ENCODE measurements at regions of chr12 and their contacts with region 1.

Region 1: GRCh38 chr12:84874125-84874824 is 38.3 kb downstream of the SLC6A15 start:
- H3K4me3 ChIP-seq: no peak overlapping the region
- H3K27ac ChIP-seq: no peak overlapping the region
- H3K4me1 ChIP-seq: no peaks in the 10 kb centered on the region
- CTCF ChIP-seq: peak; percentile 43; the same call in 1 of the 2 replicates

Region 2: GRCh38 chr12:84785951-84786350 is 88.3 kb before region 1 on chr12:
- CTCF ChIA-PET with region 1: no interaction called
- POLR2A ChIA-PET with region 1: no interaction called
- H3K4me3 ChIP-seq: no peak overlapping the region
- H3K27ac ChIP-seq: no peak overlapping the region
- H3K4me1 ChIP-seq: no peaks in the 10 kb centered on the region
- CTCF ChIP-seq: no peak

Region 3: DNA sequence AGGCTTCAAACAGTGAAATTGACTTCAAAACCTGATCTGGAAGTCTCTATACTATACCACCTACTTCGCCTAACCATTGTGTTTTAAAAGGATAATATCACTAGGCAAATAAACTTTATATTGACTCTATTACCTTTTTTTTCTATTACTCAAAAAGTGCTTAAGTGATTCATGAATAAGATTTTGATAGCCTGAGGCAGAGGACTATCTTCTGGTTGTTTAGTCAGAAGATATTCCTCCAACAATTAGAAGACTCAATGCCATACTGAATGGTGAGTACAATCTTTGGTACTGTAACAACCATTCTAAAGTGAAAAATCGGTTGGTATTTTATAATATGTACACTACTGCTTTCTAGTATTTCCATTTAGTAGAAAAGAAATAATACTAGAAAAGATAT is 15.5 kb after region 1 on chr12:
- CTCF ChIA-PET with region 1: interaction called, 10 read pairs
- POLR2A ChIA-PET with region 1: no interaction called
- H3K4me3 ChIP-seq: no peak overlapping the region
- H3K27ac ChIP-seq: no peak overlapping the region
- H3K4me1 ChIP-seq: no peaks in the 10 kb centered on the region
- CTCF ChIP-seq: no peak